ENCODE measurements at regions of chr3 and their contacts with region 1.

Region 1: DNA sequence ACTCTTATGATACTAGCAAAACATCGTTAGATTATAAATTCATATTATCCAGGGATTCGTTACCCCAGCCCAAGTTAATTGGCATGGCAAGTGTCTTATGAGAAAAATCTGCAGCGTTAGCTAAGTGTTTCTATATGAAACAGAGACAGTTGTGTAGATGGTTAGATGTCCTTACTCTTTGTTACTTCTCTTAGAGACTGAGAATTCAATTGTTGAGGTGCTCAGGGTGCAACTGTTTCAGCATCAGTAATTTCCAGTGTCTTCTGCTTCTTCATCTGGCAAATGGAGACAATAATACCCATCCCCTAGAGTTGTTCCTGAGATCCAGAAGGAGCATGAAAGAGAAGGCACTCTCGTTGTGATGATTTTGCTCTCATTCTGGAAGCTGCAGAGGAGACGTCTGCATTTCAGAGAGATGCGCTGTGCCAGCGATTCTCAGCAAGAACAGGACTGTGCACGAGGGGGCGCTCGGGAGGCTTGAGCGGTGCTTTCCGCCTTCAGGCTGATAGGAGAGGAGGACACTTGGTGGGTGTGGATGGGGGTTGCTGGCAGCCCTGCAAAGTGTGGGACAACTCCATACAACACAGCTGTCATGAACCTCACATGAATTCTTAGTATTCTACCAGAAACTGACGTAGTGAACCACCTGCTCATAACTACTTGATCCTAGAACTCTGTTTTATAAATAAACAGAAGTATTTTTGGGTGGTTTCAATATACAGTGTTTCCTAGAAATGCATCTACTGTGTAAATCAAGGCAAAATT is 39.7 kb upstream of the SPSB4 start:
- DNase-seq: peak; percentile 89
- H3K4me3 ChIP-seq: no peak overlapping the region
- H3K27ac ChIP-seq: no peak overlapping the region
- H3K4me1 ChIP-seq: no peaks in the 10 kb centered on the region
- H3K27me3 ChIP-seq: no peaks in the 10 kb centered on the region
- CTCF ChIP-seq: peak; percentile 52 to 70 (median 70)
- POLR2A ChIP-seq: no peak

Region 2: DNA sequence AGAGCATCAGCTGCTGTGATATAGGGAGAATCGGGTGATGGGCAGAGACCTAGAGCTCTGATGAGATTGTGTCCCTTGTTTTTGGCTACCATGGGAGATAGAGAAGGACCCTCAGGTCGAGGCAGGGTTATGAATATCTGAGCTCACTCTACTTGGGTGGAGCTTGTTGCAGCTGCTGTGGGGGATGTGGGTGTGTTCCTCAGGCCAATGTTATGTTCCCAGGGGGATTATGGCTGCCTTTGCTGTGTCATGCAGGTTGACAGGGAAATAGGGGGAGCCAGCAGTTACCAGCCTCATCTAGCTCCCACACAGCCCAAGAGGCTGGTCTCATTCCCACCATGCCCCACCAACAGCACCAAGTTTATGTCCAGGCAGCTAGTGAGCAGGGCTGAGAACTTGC is 202.1 kb before region 1 on chr3:
- intact Hi-C with region 1: no loop called
- DNase-seq: no peak
- H3K4me3 ChIP-seq: no peak overlapping the region
- H3K27ac ChIP-seq: no peak overlapping the region
- H3K4me1 ChIP-seq: no peaks in the 10 kb centered on the region
- H3K27me3 ChIP-seq: no peaks in the 10 kb centered on the region
- CTCF ChIP-seq: no peak
- POLR2A ChIP-seq: no peak

Region 3: GRCh38 chr3:141076797-141077571 is 65.6 kb after region 1 on chr3:
- intact Hi-C with region 1: no loop called
- DNase-seq: peak; percentile 41
- H3K4me3 ChIP-seq: no peak overlapping the region
- H3K27ac ChIP-seq: no peak overlapping the region
- H3K4me1 ChIP-seq: peaks cover 9% of the 10 kb centered on the region
- H3K27me3 ChIP-seq: no peaks in the 10 kb centered on the region
- CTCF ChIP-seq: no peak
- POLR2A ChIP-seq: no peak

Region 4: DNA sequence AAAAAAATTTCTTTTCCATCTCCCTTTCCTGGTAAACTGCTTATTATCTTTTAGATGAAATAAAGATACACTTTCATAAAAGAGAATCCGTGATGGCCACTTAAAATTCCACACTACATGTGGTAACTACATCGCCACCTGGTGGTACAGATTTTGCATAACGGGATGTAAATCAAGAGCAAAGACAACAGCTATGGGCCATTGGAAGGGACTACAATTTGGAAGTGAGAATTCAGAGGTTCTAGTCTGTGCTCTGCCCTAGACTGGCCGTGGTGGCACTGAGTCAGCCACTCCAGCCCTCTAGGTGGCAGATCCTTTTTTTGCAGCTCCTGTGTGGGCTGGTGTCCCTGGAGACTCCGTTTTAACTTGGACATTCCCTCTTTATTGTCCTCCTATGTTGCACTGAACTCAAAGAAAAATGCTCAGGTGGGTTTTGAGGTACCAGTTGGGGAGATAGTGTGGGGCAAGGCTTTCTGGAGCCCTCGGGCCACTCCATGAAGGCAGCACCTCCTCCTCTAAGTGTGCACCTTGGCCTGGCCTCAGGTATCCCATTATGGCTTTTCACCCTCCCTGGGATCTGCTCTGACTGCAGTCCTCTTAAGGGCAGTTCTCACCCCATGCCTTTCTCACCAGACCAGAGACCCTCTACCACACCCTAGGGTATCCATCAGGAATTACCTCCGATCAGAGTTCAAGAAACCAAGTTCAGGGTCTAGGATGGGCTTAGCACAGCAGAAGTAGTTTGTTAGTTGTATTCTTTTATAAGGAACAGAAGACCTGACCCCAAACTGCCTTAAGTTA is 94.6 kb after region 1 on chr3:
- intact Hi-C with region 1: loop called (anchors 10 kb)
- DNase-seq: peak; percentile 95
- H3K4me3 ChIP-seq: no peak overlapping the region
- H3K27ac ChIP-seq: no peak overlapping the region
- H3K4me1 ChIP-seq: peaks cover 4% of the 10 kb centered on the region
- H3K27me3 ChIP-seq: no peaks in the 10 kb centered on the region
- CTCF ChIP-seq: peak; percentile 81 to 90 (median 86)
- POLR2A ChIP-seq: no peak

Region 5: GRCh38 chr3:141184430-141184829 is 173.0 kb after region 1 on chr3:
- intact Hi-C with region 1: loop called (anchors 10 kb)
- DNase-seq: no peak
- H3K4me3 ChIP-seq: no peak overlapping the region
- H3K27ac ChIP-seq: no peak overlapping the region
- H3K4me1 ChIP-seq: no peaks in the 10 kb centered on the region
- H3K27me3 ChIP-seq: no peaks in the 10 kb centered on the region
- CTCF ChIP-seq: no peak
- POLR2A ChIP-seq: no peak